Activated T-helper 2 cell treated with anti-CD3 and anti-CD28 coated beads, Interferon-gamma antibody, Interleukin-2, Interleukin-4, amounts not matched to agents 10 μg/mL and 5 μg/mL and 100 μg/mL, durations not matched to agents 14 hours and 24 hours and 36 hours (primary cell): ENCODE measurements at regions of chr4 and their contacts with region 1.

Region 1: GRCh38 chr4:47562297-47562696 is 77.2 kb downstream of the ATP10D start:
- DNase-seq: no peak
- H3K4me3 Mint-ChIP-seq: no peak overlapping the region
- H3K27ac Mint-ChIP-seq: no peak overlapping the region
- H3K4me1 Mint-ChIP-seq: peaks cover 20% of the 10 kb centered on the region
- H3K27me3 Mint-ChIP-seq: peaks cover 2% of the 10 kb centered on the region

Region 2: GRCh38 chr4:46844325-46844917 is 717.9 kb before region 1 on chr4:
- intact Hi-C with region 1: no loop called
- DNase-seq: no peak
- H3K4me3 Mint-ChIP-seq: no peak overlapping the region
- H3K27ac Mint-ChIP-seq: no peak overlapping the region
- H3K4me1 Mint-ChIP-seq: no peaks in the 10 kb centered on the region
- H3K27me3 Mint-ChIP-seq: no peaks in the 10 kb centered on the region

Region 3: DNA sequence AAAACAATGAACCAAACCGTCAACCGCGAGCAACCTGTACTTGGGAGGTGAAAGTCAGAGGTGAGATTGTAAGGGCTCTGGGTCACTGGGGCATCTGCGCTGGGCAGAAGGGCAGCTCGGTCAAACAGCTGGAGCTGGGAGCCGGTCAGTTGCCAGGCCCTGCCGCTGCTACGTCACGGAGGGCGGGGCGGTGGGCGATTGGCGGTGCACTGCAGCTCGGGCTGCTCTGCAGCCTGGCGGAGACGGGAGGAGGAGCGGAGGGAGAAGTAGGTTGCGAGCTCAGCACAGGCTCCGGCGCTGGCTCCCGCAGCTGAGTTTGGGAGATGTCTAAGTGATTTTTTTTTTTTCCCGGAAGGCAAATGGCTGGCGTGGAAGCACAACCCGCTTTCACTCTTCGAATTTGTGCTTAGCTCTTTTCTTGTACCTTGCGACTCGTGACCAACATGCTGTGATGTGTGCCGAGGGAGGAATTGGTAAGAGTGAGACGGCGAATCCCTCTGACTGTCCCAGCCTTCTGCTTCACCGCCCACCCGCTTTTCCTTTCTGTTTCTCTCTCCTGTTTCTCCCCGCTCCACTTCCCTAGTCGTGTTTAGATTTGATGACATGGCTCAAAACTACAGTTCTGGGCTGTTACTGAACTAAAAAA is 77.1 kb before region 1 on chr4 and contains the start of gene ATP10D:
- intact Hi-C with region 1: loop called (anchors 2 kb)
- DNase-seq: peak; percentile 66
- H3K4me3 Mint-ChIP-seq: peak within 1 kb of the TSS; percentile 90
- H3K27ac Mint-ChIP-seq: peak within 1 kb of the TSS; percentile 43
- H3K4me1 Mint-ChIP-seq: peaks cover 20% of the 10 kb centered on the region
- H3K27me3 Mint-ChIP-seq: peaks cover 9% of the 10 kb centered on the region
- total RNA-seq, gene ATP10D: 1.6 and 2.5 TPM in 2 replicates

Region 4: GRCh38 chr4:47704693-47705325 is 142.5 kb after region 1 on chr4:
- intact Hi-C with region 1: no loop called
- DNase-seq: no peak
- H3K4me3 Mint-ChIP-seq: no peak overlapping the region
- H3K27ac Mint-ChIP-seq: no peak overlapping the region
- H3K4me1 Mint-ChIP-seq: no peaks in the 10 kb centered on the region
- H3K27me3 Mint-ChIP-seq: peaks cover 18% of the 10 kb centered on the region